ENCODE measurements at regions of chr2 and their contacts with region 1.

Region 1: DNA sequence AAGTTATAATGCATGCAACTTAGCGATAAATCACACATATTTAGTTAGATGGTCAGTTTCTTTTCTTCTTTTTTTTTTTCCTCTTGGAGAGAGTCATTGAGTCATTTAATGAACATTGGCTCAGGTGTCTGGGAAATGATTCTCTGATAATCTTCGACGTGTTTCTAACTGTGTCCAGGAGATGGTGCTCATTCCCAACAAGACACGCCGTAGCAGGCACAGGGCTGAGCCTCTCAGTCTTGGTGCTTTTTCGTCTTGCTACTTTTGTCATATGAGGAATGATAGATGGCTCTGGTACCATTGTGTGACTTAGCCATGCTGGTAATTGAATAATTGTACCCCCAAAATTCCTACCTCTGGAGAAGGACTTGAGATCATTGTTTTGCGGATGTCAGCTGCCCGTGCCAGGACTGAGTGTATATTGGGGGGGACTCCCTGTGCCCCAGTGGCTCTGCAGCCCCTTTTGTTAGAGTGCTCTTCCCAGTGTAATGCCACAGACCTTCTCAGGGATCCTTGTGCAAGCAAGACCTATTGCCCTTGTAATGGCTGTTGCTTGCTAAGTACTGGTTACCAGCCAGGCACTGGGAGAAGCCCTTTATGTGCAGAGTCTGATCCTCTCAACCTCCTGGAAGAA is 107.6 kb upstream of the CYRIA start:
- DNase-seq: peak; percentile 77
- H3K4me3 ChIP-seq: no peak overlapping the region
- H3K27ac ChIP-seq: no peak overlapping the region
- H3K4me1 ChIP-seq: peaks cover 5% of the 10 kb centered on the region
- H3K27me3 ChIP-seq: no peaks in the 10 kb centered on the region
- CTCF ChIP-seq: peak; percentile 85

Region 2: GRCh38 chr2:16727256-16727655 is 45.9 kb before region 1 on chr2:
- CTCF ChIA-PET with region 1: no interaction called
- POLR2A ChIA-PET with region 1: no interaction called
- intact Hi-C with region 1: no loop called
- DNase-seq: peak; percentile 56
- H3K4me3 ChIP-seq: no peak overlapping the region
- H3K27ac ChIP-seq: no peak overlapping the region
- H3K4me1 ChIP-seq: peaks cover 43% of the 10 kb centered on the region
- H3K27me3 ChIP-seq: no peaks in the 10 kb centered on the region
- CTCF ChIP-seq: 0 out of 2 replicates have a peak, but pooled peaks have one; percentile 29

Region 3: GRCh38 chr2:16817305-16818179 is 44.3 kb after region 1 on chr2:
- CTCF ChIA-PET with region 1: no interaction called
- POLR2A ChIA-PET with region 1: no interaction called
- intact Hi-C with region 1: no loop called
- DNase-seq: no peak
- H3K4me3 ChIP-seq: no peak overlapping the region
- H3K27ac ChIP-seq: no peak overlapping the region
- H3K4me1 ChIP-seq: no peaks in the 10 kb centered on the region
- H3K27me3 ChIP-seq: peaks cover 14% of the 10 kb centered on the region
- CTCF ChIP-seq: no peak

Region 4: DNA sequence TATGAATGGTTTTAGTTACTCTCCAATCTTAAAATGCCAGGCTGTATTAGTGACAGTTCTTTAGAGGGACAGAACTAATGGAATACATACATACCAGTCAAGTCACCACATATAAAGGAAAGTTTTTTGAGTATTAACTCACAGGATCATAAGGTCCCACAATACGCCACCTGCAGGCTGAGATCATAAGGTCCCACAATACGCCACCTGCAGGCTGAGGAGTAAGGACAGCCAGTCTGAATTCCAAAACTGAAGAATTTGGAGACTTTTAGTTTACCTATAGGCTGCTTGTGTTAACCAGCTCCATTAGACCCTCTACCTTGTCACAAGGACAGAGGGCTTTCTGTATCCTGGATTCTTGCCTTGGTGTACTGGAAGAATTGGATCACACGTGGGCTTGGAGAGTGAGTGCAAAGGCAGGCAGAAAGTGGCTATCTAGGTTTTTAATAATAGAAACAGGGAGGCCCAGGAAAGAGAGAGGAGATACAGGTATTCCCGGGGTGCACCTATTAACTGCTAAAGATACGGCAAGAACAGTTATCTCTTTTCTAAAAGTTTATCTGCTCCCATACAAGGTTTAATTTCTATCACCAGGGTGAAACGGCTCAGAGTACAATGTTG is 127.3 kb after region 1 on chr2:
- CTCF ChIA-PET with region 1: interaction called, 8 read pairs
- POLR2A ChIA-PET with region 1: no interaction called
- intact Hi-C with region 1: loop called (anchors 1 kb)
- DNase-seq: peak; percentile 68
- H3K4me3 ChIP-seq: no peak overlapping the region
- H3K27ac ChIP-seq: no peak overlapping the region
- H3K4me1 ChIP-seq: no peaks in the 10 kb centered on the region
- H3K27me3 ChIP-seq: peaks cover 3% of the 10 kb centered on the region
- CTCF ChIP-seq: peak; percentile 97

Region 5: GRCh38 chr2:17010104-17010503 is 236.9 kb after region 1 on chr2:
- CTCF ChIA-PET with region 1: no interaction called
- POLR2A ChIA-PET with region 1: no interaction called
- intact Hi-C with region 1: no loop called
- DNase-seq: no peak
- H3K4me3 ChIP-seq: no peak overlapping the region
- H3K27ac ChIP-seq: no peak overlapping the region
- H3K4me1 ChIP-seq: no peaks in the 10 kb centered on the region
- H3K27me3 ChIP-seq: peaks cover 2% of the 10 kb centered on the region
- CTCF ChIP-seq: no peak

Region 6: GRCh38 chr2:17051538-17051937 is 278.3 kb after region 1 on chr2:
- CTCF ChIA-PET with region 1: no interaction called
- POLR2A ChIA-PET with region 1: no interaction called
- intact Hi-C with region 1: loop called (anchors 10 kb)
- DNase-seq: peak; percentile 23
- H3K4me3 ChIP-seq: no peak overlapping the region
- H3K27ac ChIP-seq: no peak overlapping the region
- H3K4me1 ChIP-seq: no peaks in the 10 kb centered on the region
- H3K27me3 ChIP-seq: peaks cover 11% of the 10 kb centered on the region
- CTCF ChIP-seq: no peak

Region 7: GRCh38 chr2:17148407-17149145 is 375.4 kb after region 1 on chr2:
- CTCF ChIA-PET with region 1: no interaction called
- POLR2A ChIA-PET with region 1: no interaction called
- intact Hi-C with region 1: loop called (anchors 2 kb)
- DNase-seq: peak; percentile 30
- H3K4me3 ChIP-seq: no peak overlapping the region
- H3K27ac ChIP-seq: no peak overlapping the region
- H3K4me1 ChIP-seq: no peaks in the 10 kb centered on the region
- H3K27me3 ChIP-seq: peaks cover 8% of the 10 kb centered on the region
- CTCF ChIP-seq: peak; percentile 66

Region 8: DNA sequence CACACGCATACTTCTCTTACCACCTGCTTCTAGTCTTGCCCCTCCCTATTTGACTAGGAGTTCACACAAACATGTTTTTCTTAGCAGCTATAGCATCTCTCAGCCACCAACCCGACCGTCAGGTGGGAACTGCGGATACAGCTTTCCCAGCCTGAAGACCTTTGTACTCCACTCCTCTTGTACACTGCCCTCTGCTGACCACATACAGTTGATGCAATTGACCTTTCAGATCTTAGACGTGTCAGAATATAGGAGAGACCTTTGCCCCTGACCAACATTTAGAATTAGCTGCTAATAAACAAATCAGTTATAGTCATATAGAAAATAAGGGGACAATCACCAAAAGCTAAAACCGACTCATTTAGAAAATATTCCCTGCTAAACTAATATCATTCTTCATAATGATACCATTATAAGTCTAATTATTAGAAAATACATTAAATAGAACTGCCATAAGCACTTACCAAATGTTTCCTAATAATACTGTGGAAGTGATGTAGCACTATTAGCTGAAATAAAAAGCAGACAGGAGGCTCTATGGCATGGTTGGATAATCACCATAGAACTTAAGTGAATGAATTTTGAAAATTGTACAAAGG is 536.6 kb after region 1 on chr2:
- CTCF ChIA-PET with region 1: no interaction called
- POLR2A ChIA-PET with region 1: no interaction called
- intact Hi-C with region 1: loop called (anchors 1 kb)
- DNase-seq: peak; percentile 68
- H3K4me3 ChIP-seq: no peak overlapping the region
- H3K27ac ChIP-seq: no peak overlapping the region
- H3K4me1 ChIP-seq: no peaks in the 10 kb centered on the region
- H3K27me3 ChIP-seq: no peaks in the 10 kb centered on the region
- CTCF ChIP-seq: peak; percentile 71

Region 9: DNA sequence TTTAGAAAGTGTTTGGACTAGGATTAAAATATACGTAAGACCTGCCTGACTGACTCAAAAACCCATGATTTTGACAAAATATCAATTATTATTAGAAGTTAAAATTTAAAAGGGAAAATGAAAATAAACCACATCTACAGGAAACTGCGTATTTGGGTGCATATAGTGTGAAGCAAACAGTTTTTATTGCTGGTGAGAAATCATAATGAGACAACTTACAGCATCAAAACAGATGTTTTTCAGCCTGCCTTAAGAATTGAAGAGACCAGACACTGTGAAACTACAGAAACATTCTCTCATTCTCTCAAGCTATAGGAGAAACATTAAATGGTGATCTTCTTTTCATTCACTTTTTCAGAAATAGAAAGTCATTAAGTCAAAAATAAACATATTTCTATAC is 682.1 kb after region 1 on chr2:
- CTCF ChIA-PET with region 1: no interaction called
- POLR2A ChIA-PET with region 1: no interaction called
- intact Hi-C with region 1: loop called (anchors 10 kb)
- DNase-seq: no peak
- H3K4me3 ChIP-seq: no peak overlapping the region
- H3K27ac ChIP-seq: no peak overlapping the region
- H3K4me1 ChIP-seq: no peaks in the 10 kb centered on the region
- H3K27me3 ChIP-seq: no peaks in the 10 kb centered on the region
- CTCF ChIP-seq: no peak

Region 10: DNA sequence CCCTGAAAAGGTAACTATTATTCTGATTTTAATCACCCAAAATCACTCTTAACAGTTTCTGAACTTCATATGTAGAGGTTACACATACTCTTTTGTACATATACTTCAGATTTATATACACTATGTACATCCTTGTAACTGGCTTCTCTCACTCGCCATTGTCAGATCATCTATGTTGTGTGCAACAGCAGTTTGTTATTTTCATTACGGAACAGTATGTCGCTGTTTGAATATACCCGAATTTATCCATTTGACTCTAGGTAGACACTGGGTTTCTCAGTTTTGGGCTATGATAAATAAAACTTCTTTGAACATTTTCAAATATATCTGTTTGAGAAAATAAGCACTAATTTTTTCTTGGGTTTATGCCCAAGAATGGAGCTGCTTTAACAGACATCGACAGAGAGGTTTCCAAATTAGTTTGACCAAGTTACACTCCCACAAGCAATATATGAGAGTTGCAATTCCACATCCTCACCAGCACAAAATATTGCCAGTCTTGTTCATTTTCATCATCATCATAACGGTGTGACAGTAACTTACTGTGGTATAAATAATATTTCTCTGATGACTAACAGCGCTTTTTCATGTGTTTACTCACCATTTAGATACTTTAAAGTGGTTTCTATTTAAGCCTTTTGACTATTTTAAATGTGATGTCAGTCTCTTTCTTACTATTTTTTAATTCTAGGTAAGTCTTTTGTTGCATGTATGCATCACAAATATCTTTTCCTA is 899.6 kb after region 1 on chr2:
- CTCF ChIA-PET with region 1: interaction called, 6 read pairs
- POLR2A ChIA-PET with region 1: no interaction called
- intact Hi-C with region 1: loop called (anchors 5 kb)
- DNase-seq: no peak
- H3K4me3 ChIP-seq: no peak overlapping the region
- H3K27ac ChIP-seq: no peak overlapping the region
- H3K4me1 ChIP-seq: no peaks in the 10 kb centered on the region
- H3K27me3 ChIP-seq: no peaks in the 10 kb centered on the region
- CTCF ChIP-seq: no peak

Measured in A673 (cell line).